ENCODE measurements at regions of chr9 and their contacts with region 1.

Region 1: DNA sequence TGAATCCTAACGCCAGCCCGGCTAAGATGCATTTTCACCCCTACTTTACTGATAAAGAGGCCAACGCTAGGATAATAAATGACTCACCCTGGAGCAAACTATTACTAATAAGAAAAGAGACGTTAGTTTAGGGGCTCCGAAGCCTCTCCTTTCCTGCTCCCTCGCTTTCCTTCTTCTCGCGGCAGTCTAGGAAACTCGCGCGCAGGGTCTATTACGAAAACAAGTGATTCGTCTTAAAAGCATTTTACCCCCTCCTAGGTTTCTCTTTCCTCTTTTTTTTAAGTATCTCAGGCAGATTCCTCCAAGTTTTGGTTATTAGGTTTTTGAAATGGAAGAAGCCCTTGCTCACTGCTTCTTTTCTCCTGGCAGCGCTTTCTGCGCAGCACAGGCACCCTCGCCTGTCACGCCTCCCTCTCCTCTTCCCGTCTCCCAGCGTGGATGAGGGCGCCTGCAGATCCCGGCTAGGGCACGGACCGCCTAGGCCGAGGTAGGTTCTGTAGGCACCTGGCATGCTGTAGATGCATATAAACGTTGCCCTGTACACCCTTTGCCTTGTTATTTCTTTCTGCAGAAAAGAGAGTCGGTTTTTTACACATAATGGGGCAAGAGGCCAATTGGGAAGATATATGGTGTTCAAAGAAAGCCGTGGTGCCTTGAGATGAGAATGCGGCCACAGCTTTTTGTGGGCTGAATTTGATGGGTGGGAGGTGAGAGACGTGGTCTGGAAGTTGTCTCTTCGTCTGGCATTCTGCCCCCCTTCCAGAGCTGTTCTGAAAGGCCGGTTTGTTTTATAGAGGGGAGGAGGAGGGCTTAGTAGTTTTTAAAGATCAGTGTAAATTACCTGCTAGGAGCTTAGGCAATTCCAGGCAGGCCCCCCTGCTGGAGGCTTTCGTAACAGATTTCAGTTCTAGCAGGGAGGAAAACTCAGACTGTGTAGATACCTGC is 981 bp downstream of the GCNT1 start:
- DNase-seq: peak in 1 of 2 donors; percentile 31
- H3K4me3 ChIP-seq: peak overlapping the region; percentile 61 to 92 (median 78)
- H3K27ac ChIP-seq: peak overlapping the region; percentile 68 to 73
- H3K4me1 ChIP-seq: no peaks in the 10 kb centered on the region
- H3K27me3 ChIP-seq: no peaks in the 10 kb centered on the region
- CTCF ChIP-seq: peak in 1 of 3 donors; percentile 11
- POLR2A ChIP-seq: no peak

Region 2: GRCh38 chr9:76403352-76403751 is 56.6 kb before region 1 on chr9:
- intact Hi-C with region 1: no loop called
- DNase-seq: no peak
- H3K4me3 ChIP-seq: no peak overlapping the region
- H3K27ac ChIP-seq: peak overlapping the region in 1 of 2 donors; percentile 15
- H3K4me1 ChIP-seq: no peaks in the 10 kb centered on the region
- H3K27me3 ChIP-seq: no peaks in the 10 kb centered on the region
- CTCF ChIP-seq: peak; percentile 65 to 71 (median 66)
- POLR2A ChIP-seq: no peak

Region 3: GRCh38 chr9:76475686-76476085 is 15.7 kb after region 1 on chr9:
- intact Hi-C with region 1: loop called (anchors 2 kb)
- DNase-seq: no peak
- H3K4me3 ChIP-seq: no peak overlapping the region
- H3K27ac ChIP-seq: no peak overlapping the region
- H3K4me1 ChIP-seq: no peaks in the 10 kb centered on the region
- H3K27me3 ChIP-seq: no peaks in the 10 kb centered on the region
- CTCF ChIP-seq: no peak
- POLR2A ChIP-seq: no peak

Region 4: GRCh38 chr9:77697238-77697984 is 1237.4 kb after region 1 on chr9:
- intact Hi-C with region 1: loop called (anchors 10 kb)
- DNase-seq: no peak
- H3K4me3 ChIP-seq: no peak overlapping the region
- H3K27ac ChIP-seq: no peak overlapping the region
- H3K4me1 ChIP-seq: no peaks in the 10 kb centered on the region
- H3K27me3 ChIP-seq: no peaks in the 10 kb centered on the region
- CTCF ChIP-seq: no peak
- POLR2A ChIP-seq: no peak